ENCODE measurements at regions of chr12 and their contacts with region 1.

Region 1: GRCh38 chr12:93813972-93814821 is 137.0 kb downstream of the CRADD start:
- DNase-seq: peak; percentile 90

Region 2: GRCh38 chr12:93766796-93767523 is 47.2 kb before region 1 on chr12:
- intact Hi-C with region 1: no loop called
- DNase-seq: no peak

Region 3: DNA sequence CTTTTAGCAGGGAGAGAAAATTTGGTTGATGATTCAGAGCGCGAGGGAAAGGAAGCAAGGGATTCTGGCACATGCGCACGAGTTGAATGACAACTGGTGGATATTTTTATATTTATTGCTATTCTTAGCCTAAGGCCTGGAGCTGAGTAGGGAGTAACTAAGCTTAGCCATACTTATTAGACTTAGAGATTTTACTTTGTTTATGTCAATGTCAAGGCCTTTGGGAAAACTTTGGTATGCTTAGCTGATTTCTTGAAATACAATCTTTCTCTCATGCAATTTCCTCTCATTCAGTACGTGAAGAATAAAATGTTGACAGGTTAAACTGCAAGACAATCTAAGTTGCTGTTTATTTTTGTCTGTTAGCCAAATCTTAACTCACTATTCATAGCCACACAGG is 35.9 kb before region 1 on chr12:
- intact Hi-C with region 1: loop called (anchors 5 kb)
- DNase-seq: no peak

Measured in cardiac septum (tissue), 1 donor.